Heart right ventricle (tissue), 16 donors: ENCODE measurements at regions of chr11 and their contacts with region 1.

Region 1: GRCh38 chr11:33829433-33830141 is 55.3 kb upstream of the FBXO3 start:
- DNase-seq: peak; percentile 24 to 57
- ATAC-seq: peak; percentile 76 to 89 (median 85)
- H3K4me3 ChIP-seq: peak overlapping the region; percentile 19 to 61 (median 48)
- H3K27ac ChIP-seq: no peak overlapping the region
- H3K4me1 ChIP-seq: peaks cover 4 to 12% (median 9%) of the 10 kb centered on the region in 9 donors
- H3K27me3 ChIP-seq: peaks cover 0 to 47% (median 32%) of the 10 kb centered on the region in 7 donors
- CTCF ChIP-seq: peak; percentile 61 to 84 (median 76)

Region 2: GRCh38 chr11:32960553-32961164 is 868.9 kb before region 1 on chr11:
- intact Hi-C with region 1: loop called in 1 of 10 experiments (anchors 10 kb)
- DNase-seq: no peak
- ATAC-seq: no peak
- H3K4me3 ChIP-seq: no peak overlapping the region
- H3K27ac ChIP-seq: no peak overlapping the region
- H3K4me1 ChIP-seq: no peaks in the 10 kb centered on the region
- H3K27me3 ChIP-seq: no peaks in the 10 kb centered on the region
- CTCF ChIP-seq: peak; percentile 40 to 80 (median 71)

Region 3: DNA sequence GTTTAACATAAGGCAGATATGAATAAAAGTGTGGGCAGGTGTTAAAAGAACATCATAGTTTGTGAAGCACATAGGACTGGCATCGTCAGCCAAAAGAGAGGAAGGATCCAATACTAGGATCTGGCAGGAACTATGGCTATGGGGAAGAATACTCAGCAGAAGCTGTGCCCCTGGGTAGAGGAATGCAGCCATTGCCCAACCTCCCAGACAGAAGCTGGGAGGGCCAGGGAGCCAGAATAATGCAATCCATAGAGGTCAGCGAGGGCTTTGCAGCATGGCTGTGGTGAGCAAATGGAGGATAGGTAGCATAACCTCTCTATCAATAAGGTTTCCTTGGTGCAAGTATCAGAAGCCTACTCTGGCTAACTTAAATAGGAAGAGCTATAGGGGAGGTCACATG is 656.6 kb before region 1 on chr11:
- intact Hi-C with region 1: loop called in 1 of 10 experiments (anchors 5 kb)
- DNase-seq: no peak
- ATAC-seq: peak in 3 of 8 donors; percentile 40 to 89 (median 47)
- H3K4me3 ChIP-seq: no peak overlapping the region
- H3K27ac ChIP-seq: no peak overlapping the region
- H3K4me1 ChIP-seq: peaks cover 0 to 9% (median 3%) of the 10 kb centered on the region in 9 donors
- H3K27me3 ChIP-seq: no peaks in the 10 kb centered on the region
- CTCF ChIP-seq: no peak

Region 4: GRCh38 chr11:33375688-33376311 is 453.8 kb before region 1 on chr11:
- intact Hi-C with region 1: loop called in 1 of 10 experiments (anchors 5 kb)
- DNase-seq: no peak
- ATAC-seq: no peak
- H3K4me3 ChIP-seq: peak within 1 kb of the TSS in 9 of 10 donors; percentile 33 to 53 (median 46)
- H3K27ac ChIP-seq: no peak within 1 kb of the TSS
- H3K4me1 ChIP-seq: peaks cover 0 to 12% (median 5%) of the 10 kb centered on the region in 9 donors
- H3K27me3 ChIP-seq: peaks cover 0 to 62% (median 33%) of the 10 kb centered on the region in 7 donors
- CTCF ChIP-seq: no peak

Region 5: DNA sequence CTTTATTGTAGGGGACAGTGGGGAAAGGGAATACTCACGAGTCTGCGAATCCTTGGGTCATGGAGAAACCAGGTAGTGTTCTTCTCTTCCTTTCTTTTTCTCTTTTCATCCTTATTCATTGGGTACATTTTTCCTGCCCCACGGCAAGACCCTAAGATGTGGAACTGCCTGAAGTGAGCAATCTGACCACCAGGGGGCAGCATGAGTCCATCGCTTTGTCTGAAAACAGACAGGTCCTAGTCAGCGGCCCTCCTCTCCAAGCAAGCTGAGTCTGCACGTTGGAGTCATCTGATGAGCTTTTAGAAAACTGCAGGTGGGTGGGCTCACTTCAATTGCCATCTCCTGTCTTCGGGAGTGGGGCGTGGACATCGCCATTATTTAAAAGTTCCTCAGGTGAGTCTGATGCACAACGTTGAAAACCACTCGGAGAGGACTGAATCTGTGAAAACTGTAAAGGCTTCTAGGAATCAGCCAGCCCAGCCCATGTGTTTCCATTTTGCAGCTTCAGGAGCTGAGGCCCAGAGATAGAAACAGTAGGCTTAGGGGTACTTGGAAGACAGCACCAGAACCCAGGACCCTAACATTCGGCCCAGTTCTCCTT is 21.3 kb before region 1 on chr11:
- intact Hi-C with region 1: loop called in 3 of 10 experiments (anchors 1 to 2 kb)
- DNase-seq: peak; percentile 84 to 87
- ATAC-seq: peak; percentile 75 to 96 (median 90)
- H3K4me3 ChIP-seq: no peak overlapping the region
- H3K27ac ChIP-seq: no peak overlapping the region
- H3K4me1 ChIP-seq: peaks cover 0 to 7% (median 0%) of the 10 kb centered on the region in 9 donors
- H3K27me3 ChIP-seq: peaks cover 0 to 10% (median 3%) of the 10 kb centered on the region in 7 donors
- CTCF ChIP-seq: peak; percentile 86 to 94 (median 91)

Region 6: DNA sequence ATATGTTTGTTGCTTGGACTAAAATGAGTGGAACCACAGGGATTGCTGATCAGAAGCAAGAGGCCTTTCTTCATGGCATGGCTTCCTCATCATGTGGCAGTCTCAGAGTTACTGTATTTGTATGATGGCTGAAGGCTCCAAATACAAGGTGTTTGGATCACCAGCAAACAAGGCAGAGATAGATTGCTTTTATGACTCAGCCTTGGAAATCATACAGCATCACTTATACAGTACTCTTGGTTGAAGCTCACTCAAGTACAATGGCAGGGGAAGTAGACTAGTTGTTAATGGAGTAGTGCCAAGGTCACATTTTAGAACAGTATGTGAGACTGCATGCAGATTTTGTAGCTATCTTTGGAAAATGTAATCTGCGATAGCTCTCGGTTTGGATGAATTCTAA is 238.5 kb after region 1 on chr11:
- intact Hi-C with region 1: no loop called
- DNase-seq: peak in 1 of 2 donors; percentile 4
- ATAC-seq: peak; percentile 60 to 94 (median 88)
- H3K4me3 ChIP-seq: no peak overlapping the region
- H3K27ac ChIP-seq: peak overlapping the region in 6 of 10 donors; percentile 32 to 63 (median 44)
- H3K4me1 ChIP-seq: peaks cover 3 to 71% (median 55%) of the 10 kb centered on the region in 9 donors
- H3K27me3 ChIP-seq: no peaks in the 10 kb centered on the region
- CTCF ChIP-seq: no peak

Region 7: DNA sequence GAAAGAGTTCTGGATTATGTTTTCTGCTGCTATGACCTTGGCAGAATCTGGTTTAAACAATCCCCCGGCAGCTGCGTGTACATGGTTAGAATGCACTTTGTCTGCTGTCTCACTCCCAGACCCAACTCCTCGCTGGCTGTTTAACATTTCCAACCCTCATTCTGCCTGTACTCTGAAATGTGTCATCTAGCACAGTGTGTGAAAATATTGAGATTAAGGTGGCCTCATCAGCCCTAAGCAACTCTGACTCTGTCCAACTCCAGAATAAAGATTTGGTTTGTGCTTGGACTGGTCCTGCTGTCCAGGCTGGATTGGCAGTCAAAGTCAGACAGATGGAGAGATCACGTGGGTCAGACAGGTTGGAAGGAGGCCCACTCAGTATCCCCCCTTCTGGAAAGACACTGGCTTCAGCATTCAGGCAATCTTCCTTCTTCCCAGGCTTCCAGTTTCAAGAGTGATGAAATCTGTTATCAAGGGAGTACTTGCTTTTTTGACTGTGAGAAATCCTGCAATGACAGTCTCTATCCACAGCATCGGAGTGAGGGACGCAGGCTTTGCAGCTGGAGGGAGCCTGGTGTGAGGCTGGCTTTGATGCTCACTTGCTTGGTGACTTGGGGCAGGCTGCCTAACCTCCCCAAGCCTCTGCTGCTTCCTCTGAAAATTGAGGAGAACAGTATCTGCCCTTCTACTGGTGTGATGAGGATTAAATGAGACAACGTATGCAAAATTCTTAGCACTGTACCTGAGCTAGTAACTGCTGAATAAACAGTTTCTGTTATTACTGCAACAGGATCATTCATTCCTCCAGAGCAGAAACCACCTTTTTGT is 498.4 kb after region 1 on chr11:
- intact Hi-C with region 1: no loop called
- DNase-seq: peak; percentile 39 to 70
- ATAC-seq: peak; percentile 76 to 89 (median 81)
- H3K4me3 ChIP-seq: no peak overlapping the region
- H3K27ac ChIP-seq: peak overlapping the region in 7 of 10 donors; percentile 7 to 70 (median 50)
- H3K4me1 ChIP-seq: peaks cover 8 to 80% (median 41%) of the 10 kb centered on the region in 9 donors
- H3K27me3 ChIP-seq: no peaks in the 10 kb centered on the region
- CTCF ChIP-seq: no peak